A673 (cell line): ENCODE measurements at regions of chr6 and their contacts with region 1.

Region 1: DNA sequence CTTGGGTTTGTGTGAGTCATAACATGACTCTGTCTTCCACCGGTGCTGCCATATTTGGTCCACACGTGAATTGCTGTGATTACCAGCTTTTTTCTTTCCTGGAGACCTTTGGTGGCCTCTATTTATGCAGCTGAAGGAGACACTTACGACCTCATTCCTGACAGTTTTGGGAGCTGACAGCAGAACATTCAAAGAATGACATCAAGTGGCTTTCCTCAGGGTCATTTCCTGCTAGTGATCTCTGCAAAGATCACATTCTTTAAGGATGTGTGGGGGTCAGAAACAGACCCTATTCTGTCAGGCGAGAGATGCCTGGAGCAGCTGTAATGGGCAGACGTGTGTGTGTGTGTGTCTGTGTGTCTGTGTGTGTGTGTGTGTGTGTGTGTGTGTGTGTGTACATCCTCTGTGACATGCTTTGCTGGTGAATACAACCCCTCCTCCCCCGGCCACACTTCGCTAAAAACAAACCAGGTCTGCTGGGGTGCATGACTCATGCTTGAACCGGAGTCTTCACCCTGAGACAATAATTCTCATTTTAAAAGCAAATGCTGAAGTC is 115.6 kb downstream of the TMEM170B start:
- DNase-seq: peak; percentile 43
- H3K4me3 ChIP-seq: no peak overlapping the region
- H3K27ac ChIP-seq: no peak overlapping the region
- H3K4me1 ChIP-seq: peaks cover 5% of the 10 kb centered on the region
- H3K27me3 ChIP-seq: no peaks in the 10 kb centered on the region
- CTCF ChIP-seq: no peak

Region 2: DNA sequence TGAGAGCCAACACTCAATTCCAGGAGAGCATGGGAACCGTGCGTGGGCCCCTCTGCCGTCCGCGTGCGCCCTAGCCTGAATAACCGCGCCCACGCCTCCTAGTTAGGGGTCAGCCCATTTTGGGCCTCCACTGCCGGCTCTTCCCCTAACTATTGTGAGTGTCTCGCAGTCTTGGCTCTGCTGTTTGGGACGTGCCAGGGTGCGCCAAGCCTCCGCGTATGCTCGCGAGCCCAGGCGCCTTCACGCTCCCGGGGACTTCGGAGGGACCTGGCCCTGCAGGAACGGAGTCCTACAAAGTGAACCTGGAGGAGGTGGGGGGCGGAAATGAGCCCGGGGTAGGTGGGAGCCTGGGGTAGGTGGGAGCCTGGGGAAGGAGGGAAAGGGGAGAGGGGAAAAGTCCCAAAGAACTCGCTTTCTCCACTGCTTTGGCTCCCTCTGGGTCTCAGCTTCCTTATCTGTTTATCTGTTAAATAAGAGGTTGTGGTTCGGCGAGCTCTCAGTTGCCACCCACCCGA is 770.4 kb before region 1 on chr6:
- CTCF ChIA-PET with region 1: no interaction called
- POLR2A ChIA-PET with region 1: no interaction called
- intact Hi-C with region 1: no loop called
- DNase-seq: no peak
- H3K4me3 ChIP-seq: no peak overlapping the region
- H3K27ac ChIP-seq: no peak overlapping the region
- H3K4me1 ChIP-seq: peaks cover 8% of the 10 kb centered on the region
- H3K27me3 ChIP-seq: peaks cover 4% of the 10 kb centered on the region
- CTCF ChIP-seq: no peak

Region 3: DNA sequence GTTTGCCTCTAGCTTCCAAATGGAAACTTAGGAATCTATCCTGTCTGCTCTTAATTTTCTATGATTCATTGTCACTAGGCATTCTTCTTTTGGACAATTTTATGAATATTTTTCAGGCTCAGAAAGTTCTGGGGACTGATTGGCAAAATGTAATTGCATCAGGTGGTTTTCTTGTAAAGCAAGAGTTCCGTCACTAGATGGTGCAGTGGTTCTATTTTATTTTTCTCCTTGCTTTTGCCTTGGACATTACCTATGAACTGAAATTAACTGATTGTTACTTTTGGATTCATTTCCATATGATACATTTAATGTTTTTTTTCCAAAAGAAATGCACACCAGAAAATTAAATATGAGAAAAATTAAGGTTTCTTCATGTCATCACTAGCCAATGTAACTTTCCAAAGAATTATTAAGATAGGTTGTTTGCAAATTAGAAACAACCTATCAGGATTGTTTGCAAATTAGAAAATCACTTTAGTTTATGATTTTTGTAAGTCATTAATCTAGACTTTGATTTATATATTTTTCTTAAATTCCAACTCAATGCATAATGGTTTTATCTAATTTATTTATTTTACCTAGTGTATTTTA is 67.6 kb before region 1 on chr6:
- CTCF ChIA-PET with region 1: no interaction called
- POLR2A ChIA-PET with region 1: no interaction called
- intact Hi-C with region 1: loop called (anchors 5 kb)
- DNase-seq: peak; percentile 60
- H3K4me3 ChIP-seq: no peak overlapping the region
- H3K27ac ChIP-seq: no peak overlapping the region
- H3K4me1 ChIP-seq: no peaks in the 10 kb centered on the region
- H3K27me3 ChIP-seq: no peaks in the 10 kb centered on the region
- CTCF ChIP-seq: peak; percentile 74

Region 4: GRCh38 chr6:12033770-12034169 is 380.7 kb after region 1 on chr6:
- CTCF ChIA-PET with region 1: no interaction called
- POLR2A ChIA-PET with region 1: no interaction called
- intact Hi-C with region 1: loop called (anchors 10 kb)
- DNase-seq: peak; percentile 77
- H3K4me3 ChIP-seq: no peak overlapping the region
- H3K27ac ChIP-seq: no peak overlapping the region
- H3K4me1 ChIP-seq: peaks cover 22% of the 10 kb centered on the region
- H3K27me3 ChIP-seq: no peaks in the 10 kb centered on the region
- CTCF ChIP-seq: no peak

Region 5: DNA sequence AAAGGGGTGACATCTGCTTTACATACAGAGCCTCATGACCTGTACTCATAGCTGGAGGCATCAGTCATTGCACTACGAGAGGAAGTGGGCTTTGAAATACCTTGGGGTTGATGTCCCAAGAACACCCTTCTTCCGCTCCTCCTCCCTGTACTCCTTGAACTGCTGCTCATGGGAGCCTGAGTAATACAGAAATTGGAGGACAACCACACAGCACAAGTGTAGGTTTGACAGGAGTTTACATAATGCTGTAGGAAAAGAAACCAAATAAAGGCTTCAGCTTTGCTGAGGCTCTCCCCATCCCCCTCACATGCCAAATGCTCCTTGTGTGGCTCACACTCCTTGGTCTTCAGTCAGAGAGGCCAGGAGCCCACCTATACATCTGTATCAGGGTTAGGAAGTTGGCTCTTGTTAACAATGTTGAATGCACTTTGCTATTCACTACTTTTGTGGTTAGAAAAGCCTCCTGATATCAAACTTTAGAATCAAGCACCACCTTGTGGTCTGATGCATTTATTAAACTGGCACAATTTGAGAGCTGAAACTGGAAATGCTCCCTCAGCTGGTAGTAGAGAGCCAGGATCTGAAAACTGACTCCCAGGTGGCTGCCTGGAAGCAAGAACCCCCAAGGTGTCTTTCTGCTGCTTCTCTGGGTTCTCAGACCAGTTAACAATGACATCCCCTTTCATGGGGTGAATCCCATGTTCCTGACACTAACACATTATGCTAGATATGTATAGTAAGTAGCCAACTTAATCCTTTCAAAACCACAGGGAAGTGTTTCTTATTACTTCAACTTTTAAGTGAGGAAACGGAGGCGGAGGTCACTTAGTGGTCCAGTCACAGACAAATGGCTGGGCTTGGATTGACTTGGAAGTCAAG is 580.8 kb after region 1 on chr6:
- CTCF ChIA-PET with region 1: interaction called, 26 read pairs
- POLR2A ChIA-PET with region 1: no interaction called
- intact Hi-C with region 1: loop called (anchors 1 kb)
- DNase-seq: peak; percentile 75
- H3K4me3 ChIP-seq: no peak overlapping the region
- H3K27ac ChIP-seq: no peak overlapping the region
- H3K4me1 ChIP-seq: no peaks in the 10 kb centered on the region
- H3K27me3 ChIP-seq: no peaks in the 10 kb centered on the region
- CTCF ChIP-seq: peak; percentile 83

Region 6: GRCh38 chr6:12289933-12290820 is 637.1 kb after region 1 on chr6 and contains the start of gene EDN1:
- CTCF ChIA-PET with region 1: interaction called, 10 read pairs
- POLR2A ChIA-PET with region 1: no interaction called
- intact Hi-C with region 1: loop called (anchors 5 kb)
- DNase-seq: peak; percentile 87
- H3K4me3 ChIP-seq: peak within 1 kb of the TSS; percentile 39
- H3K27ac ChIP-seq: no peak within 1 kb of the TSS
- H3K4me1 ChIP-seq: no peaks in the 10 kb centered on the region
- H3K27me3 ChIP-seq: peaks cover 25% of the 10 kb centered on the region
- CTCF ChIP-seq: peak; percentile 45
- total RNA-seq, gene EDN1: not detected in 2 replicates

Region 7: DNA sequence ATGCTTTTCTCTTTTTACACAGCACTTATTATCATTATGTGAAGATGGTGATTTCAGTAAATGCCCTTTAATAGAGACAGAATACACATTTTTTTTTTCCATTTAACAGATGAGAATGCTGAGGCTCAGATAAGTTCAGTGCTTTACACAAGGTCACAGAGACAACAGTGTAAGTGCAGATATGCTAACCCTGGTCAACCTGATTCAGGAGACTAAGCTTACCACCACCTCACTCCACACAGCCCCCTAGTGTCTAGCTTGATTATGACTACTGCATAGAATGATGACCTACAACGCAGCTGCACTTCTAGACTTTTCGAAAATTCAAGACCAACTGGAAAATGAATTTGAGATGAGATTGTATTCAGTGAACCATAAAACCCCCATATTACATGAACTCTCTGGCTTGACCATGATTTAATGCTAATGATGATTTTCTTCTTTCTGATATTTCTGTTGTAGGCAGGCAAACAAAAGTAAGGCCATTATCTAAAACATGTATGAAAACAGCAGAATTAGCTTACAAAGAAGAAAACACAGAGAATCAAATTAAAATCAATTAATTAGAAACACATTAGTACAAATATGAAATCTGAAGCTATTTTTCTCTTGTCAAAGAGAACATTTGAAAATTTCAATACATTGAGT is 851.3 kb after region 1 on chr6:
- CTCF ChIA-PET with region 1: no interaction called
- POLR2A ChIA-PET with region 1: no interaction called
- intact Hi-C with region 1: loop called (anchors 5 kb)
- DNase-seq: peak; percentile 40
- H3K4me3 ChIP-seq: no peak overlapping the region
- H3K27ac ChIP-seq: no peak overlapping the region
- H3K4me1 ChIP-seq: no peaks in the 10 kb centered on the region
- H3K27me3 ChIP-seq: no peaks in the 10 kb centered on the region
- CTCF ChIP-seq: peak; percentile 58

Region 8: DNA sequence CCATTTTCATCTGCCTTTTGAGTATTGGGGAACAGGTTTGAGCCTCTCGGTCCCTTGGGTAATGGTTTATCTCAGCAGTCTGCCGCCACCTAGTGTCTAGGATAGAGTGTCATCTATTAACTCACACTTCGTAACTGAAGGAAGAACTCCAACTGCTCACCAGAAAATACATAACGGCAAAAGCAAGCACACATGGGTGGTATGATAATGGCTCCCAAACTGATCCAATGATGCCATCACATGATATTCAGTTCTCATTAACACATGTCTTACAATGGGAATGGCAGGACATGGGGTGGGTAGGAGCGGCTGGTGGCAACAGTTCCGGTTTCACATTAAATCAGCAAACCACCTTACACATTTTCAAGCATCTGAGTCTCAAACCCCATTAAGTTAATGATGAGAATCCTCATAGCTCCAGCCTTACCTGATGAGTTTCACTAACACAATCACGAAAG is 952.8 kb after region 1 on chr6:
- CTCF ChIA-PET with region 1: interaction called, 4 read pairs
- POLR2A ChIA-PET with region 1: no interaction called
- intact Hi-C with region 1: loop called (anchors 5 kb)
- DNase-seq: peak; percentile 82
- H3K4me3 ChIP-seq: no peak overlapping the region
- H3K27ac ChIP-seq: no peak overlapping the region
- H3K4me1 ChIP-seq: peaks cover 11% of the 10 kb centered on the region
- H3K27me3 ChIP-seq: no peaks in the 10 kb centered on the region
- CTCF ChIP-seq: peak; percentile 82